ENCODE measurements at regions of chr11 and their contacts with region 1.

Region 1: DNA sequence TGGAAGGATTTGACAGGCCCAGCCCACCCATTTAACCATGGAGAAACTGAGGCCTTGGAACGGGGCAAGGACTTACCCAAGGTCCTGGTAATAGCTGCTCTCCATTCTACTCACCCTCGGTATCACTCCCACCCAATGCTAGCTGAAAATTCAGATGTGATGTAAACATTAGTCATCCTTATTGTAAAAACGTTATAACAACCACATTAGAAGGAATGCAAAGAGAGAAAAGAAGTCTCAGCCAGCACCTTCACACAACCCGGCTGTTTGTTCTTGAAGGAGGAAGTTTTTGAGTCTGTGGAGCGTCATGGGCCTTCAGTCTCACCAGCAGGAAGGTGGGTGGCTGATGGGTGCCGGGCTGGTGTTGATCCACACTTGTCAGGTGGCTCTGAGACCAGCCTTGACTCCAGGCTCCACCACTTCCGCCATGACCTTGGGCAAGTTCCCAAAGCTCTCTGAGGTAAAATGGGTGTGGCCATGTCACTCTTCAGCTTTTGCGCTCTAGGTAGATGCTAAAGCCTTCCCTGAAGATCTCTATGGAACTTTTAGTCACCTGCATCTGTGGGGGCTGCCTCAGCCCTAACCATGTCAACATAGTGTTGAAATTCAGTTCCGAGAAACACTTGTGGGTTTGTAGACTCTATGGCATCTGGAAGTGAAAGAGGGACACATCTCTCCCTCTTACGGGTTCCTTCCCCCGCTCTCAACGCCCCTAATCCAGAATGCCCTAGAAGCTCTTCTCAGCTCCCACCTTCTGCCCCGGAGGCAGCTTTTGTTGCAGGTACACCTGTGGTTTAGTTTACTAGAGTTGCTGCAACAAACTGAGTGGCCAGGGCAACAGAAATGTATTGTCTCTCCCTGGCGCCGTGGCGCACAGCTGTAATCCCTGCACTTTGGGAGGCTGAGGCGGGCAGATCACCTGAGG is 14.8 kb downstream of the CD6 start:
- DNase-seq: peak; percentile 59 to 99 (median 97)
- ATAC-seq: peak; percentile 93
- H3K4me3 ChIP-seq: peak overlapping the region; percentile 42
- H3K4me3 Mint-ChIP-seq: peak overlapping the region; percentile 75 to 96 (median 88)
- H3K27ac ChIP-seq: peak overlapping the region; percentile 96
- H3K27ac Mint-ChIP-seq: peak overlapping the region; percentile 91 to 100 (median 99)
- H3K4me1 ChIP-seq: peaks cover 62 to 88% of the 10 kb centered on the region in 2 donors
- H3K4me1 Mint-ChIP-seq: peaks cover 49 to 99% (median 94%) of the 10 kb centered on the region in 7 donors
- H3K27me3 ChIP-seq: no peaks in the 10 kb centered on the region
- H3K27me3 Mint-ChIP-seq: no peaks in the 10 kb centered on the region

Region 2: GRCh38 chr11:60913793-60914632 is 72.2 kb before region 1 on chr11 and contains the start of gene TMEM109:
- CTCF ChIA-PET with region 1: interaction called, 4 read pairs
- POLR2A ChIA-PET with region 1: interaction called, 16 read pairs
- intact Hi-C with region 1: loop called (anchors 1 to 5 kb)
- DNase-seq: peak; percentile 77 to 93 (median 91)
- ATAC-seq: peak; percentile 76
- H3K4me3 ChIP-seq: peak within 1 kb of the TSS; percentile 94
- H3K4me3 Mint-ChIP-seq: peak within 1 kb of the TSS; percentile 91 to 99 (median 98)
- H3K27ac ChIP-seq: peak within 1 kb of the TSS; percentile 94
- H3K27ac Mint-ChIP-seq: peak within 1 kb of the TSS; percentile 91 to 99 (median 97)
- H3K4me1 ChIP-seq: peaks cover 43 to 45% of the 10 kb centered on the region in 2 donors
- H3K4me1 Mint-ChIP-seq: peaks cover 39 to 77% (median 60%) of the 10 kb centered on the region in 7 donors
- H3K27me3 ChIP-seq: no peaks in the 10 kb centered on the region
- H3K27me3 Mint-ChIP-seq: peaks cover 0 to 11% (median 0%) of the 10 kb centered on the region in 5 donors
- total RNA-seq, gene TMEM109: 49.8 to 99.8 (median 56.9) TPM

Region 3: DNA sequence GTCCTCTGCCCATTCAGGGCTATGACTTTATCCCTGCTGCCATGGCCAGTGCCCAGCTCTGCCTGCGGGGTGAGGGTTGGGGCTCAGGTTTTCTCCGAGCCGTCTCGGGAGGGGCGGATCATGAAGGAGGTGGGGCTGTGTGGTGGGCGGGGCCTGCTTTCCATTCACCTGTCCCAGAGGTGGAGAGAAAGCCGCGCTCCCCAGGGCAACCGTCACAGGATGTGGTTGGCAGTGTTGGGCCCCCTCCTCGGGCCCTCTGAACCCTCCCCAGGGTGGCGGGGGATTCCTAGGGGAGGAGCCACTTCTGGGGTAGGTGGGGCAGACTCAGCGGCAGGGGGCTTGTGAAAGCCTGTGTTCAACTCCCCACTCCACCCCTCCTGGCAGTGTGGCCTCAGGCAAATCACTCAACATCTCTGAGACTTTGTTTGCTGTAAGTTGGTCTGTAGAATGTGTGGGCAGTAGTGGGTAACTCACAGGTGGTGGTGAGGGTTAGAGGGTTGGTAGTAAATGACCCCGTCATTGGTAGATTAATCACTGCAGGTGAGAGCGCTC is 35.5 kb after region 1 on chr11:
- CTCF ChIA-PET with region 1: interaction called, 3 read pairs
- POLR2A ChIA-PET with region 1: interaction called, 22 read pairs
- intact Hi-C with region 1: loop called (anchors 1 kb)
- DNase-seq: peak; percentile 72 to 98 (median 96)
- ATAC-seq: peak; percentile 91
- H3K4me3 ChIP-seq: peak overlapping the region; percentile 53
- H3K4me3 Mint-ChIP-seq: peak overlapping the region; percentile 68 to 90 (median 81)
- H3K27ac ChIP-seq: peak overlapping the region; percentile 82
- H3K27ac Mint-ChIP-seq: peak overlapping the region; percentile 88 to 100 (median 98)
- H3K4me1 ChIP-seq: peaks cover 49 to 56% of the 10 kb centered on the region in 2 donors
- H3K4me1 Mint-ChIP-seq: peaks cover 40 to 79% (median 76%) of the 10 kb centered on the region in 7 donors
- H3K27me3 ChIP-seq: no peaks in the 10 kb centered on the region
- H3K27me3 Mint-ChIP-seq: no peaks in the 10 kb centered on the region

Region 4: DNA sequence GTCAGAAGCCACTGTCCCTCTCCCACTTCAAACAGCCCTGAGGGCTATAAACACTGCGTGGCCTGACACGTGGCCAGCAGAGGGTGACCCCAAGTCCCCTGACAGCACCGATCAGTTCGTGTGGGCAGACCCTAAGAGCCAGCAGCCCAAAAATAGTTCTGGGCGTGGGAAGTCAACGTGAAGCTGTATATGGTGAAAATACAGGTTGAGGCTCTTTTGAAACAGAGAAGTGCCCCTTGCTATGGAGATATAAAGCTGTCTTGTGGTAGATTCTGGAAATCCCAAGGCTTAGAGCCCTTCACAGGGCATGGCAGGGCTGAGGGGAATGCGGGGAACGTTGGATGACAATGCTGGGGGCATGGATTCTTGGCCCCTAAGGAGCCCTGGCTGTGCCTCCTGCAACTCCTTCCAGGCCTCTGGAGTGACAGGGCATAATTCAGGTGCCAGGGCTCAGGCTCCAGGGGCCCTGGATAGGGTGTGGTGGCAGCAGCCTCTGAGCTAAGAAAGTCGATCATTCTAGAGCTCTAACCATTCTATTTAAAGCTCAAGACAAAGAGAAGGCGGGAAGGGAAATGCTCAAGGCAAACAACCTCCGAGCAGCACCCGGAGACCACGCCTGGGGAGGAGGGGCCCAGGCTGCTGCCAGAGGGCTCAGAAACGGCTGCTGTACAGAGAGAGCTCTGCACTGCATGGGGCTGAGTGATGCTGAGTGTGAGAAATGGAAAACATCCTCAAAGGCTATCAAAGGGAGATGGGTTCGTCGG is 55.7 kb after region 1 on chr11:
- CTCF ChIA-PET with region 1: interaction called, 7 read pairs
- POLR2A ChIA-PET with region 1: interaction called, 40 read pairs
- intact Hi-C with region 1: loop called in 1 of 2 experiments (anchors 1 kb)
- DNase-seq: peak; percentile 60 to 97 (median 96)
- ATAC-seq: peak; percentile 98
- H3K4me3 ChIP-seq: peak overlapping the region; percentile 20
- H3K4me3 Mint-ChIP-seq: peak overlapping the region; percentile 70 to 85 (median 76)
- H3K27ac ChIP-seq: peak overlapping the region; percentile 81
- H3K27ac Mint-ChIP-seq: peak overlapping the region; percentile 96 to 100 (median 98)
- H3K4me1 ChIP-seq: peaks cover 22 to 49% of the 10 kb centered on the region in 2 donors
- H3K4me1 Mint-ChIP-seq: peaks cover 40 to 70% (median 59%) of the 10 kb centered on the region in 7 donors
- H3K27me3 ChIP-seq: no peaks in the 10 kb centered on the region
- H3K27me3 Mint-ChIP-seq: no peaks in the 10 kb centered on the region

Region 5: GRCh38 chr11:61071208-61071681 is 85.0 kb after region 1 on chr11:
- CTCF ChIA-PET with region 1: interaction called, 4 read pairs
- POLR2A ChIA-PET with region 1: interaction called, 60 read pairs
- intact Hi-C with region 1: loop called in 1 of 2 experiments (anchors 1 kb)
- DNase-seq: peak in 8 of 9 donors; percentile 56 to 78 (median 71)
- ATAC-seq: peak; percentile 96
- H3K4me3 ChIP-seq: peak overlapping the region; percentile 21
- H3K4me3 Mint-ChIP-seq: peak overlapping the region; percentile 65 to 87 (median 76)
- H3K27ac ChIP-seq: peak overlapping the region; percentile 76
- H3K27ac Mint-ChIP-seq: peak overlapping the region; percentile 92 to 97 (median 97)
- H3K4me1 ChIP-seq: peaks cover 41 to 81% of the 10 kb centered on the region in 2 donors
- H3K4me1 Mint-ChIP-seq: peaks cover 69 to 99% (median 91%) of the 10 kb centered on the region in 7 donors
- H3K27me3 ChIP-seq: no peaks in the 10 kb centered on the region
- H3K27me3 Mint-ChIP-seq: peaks cover 0 to 4% (median 0%) of the 10 kb centered on the region in 5 donors

Region 6: DNA sequence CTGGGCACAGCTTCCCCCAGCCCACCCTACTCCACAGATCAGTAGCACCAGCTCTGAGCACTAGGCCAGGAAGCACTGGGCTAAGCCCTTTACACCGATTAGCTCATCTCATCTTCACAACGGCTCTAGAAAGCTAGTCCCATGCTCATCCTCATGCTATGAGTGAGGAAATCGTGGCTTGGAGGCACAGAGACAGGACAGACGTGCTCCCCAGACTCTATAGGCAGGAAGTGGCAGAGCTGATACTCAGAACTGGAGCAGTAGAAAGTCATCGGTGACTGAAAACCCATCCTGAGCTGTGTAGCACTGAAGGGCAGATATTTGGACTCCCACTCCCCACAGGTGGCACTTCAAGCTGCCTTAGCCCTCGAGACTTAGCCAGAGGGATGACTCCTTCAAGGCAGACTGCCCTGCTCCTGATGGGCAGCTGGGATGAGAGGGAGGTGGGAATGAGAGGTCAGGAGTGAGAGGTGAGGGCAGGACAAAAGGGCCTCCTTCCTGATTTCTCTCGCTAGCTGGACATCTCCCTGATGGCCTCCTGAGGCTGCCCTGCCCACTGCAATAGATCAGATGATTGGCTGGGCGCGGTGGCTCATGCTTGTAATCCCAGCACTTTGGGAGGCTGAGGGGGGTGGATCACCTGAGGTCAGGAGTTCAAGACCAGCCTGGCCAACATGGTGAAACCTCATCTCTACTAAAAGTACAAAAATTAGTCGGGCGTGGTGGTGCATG is 125.7 kb after region 1 on chr11:
- CTCF ChIA-PET with region 1: interaction called, 4 read pairs
- POLR2A ChIA-PET with region 1: interaction called, 4 read pairs
- intact Hi-C with region 1: loop called in 1 of 2 experiments (anchors 5 kb)
- DNase-seq: peak in 8 of 9 donors; percentile 57 to 78 (median 74)
- ATAC-seq: peak; percentile 81
- H3K4me3 ChIP-seq: peak overlapping the region; percentile 31
- H3K4me3 Mint-ChIP-seq: peak overlapping the region in 9 of 10 donors; percentile 82 to 93 (median 86)
- H3K27ac ChIP-seq: peak overlapping the region; percentile 78
- H3K27ac Mint-ChIP-seq: peak overlapping the region in 7 of 9 donors; percentile 81 to 98 (median 92)
- H3K4me1 ChIP-seq: peaks cover 58 to 93% of the 10 kb centered on the region in 2 donors
- H3K4me1 Mint-ChIP-seq: peaks cover 81 to 100% (median 97%) of the 10 kb centered on the region in 7 donors
- H3K27me3 ChIP-seq: no peaks in the 10 kb centered on the region
- H3K27me3 Mint-ChIP-seq: no peaks in the 10 kb centered on the region

Region 7: DNA sequence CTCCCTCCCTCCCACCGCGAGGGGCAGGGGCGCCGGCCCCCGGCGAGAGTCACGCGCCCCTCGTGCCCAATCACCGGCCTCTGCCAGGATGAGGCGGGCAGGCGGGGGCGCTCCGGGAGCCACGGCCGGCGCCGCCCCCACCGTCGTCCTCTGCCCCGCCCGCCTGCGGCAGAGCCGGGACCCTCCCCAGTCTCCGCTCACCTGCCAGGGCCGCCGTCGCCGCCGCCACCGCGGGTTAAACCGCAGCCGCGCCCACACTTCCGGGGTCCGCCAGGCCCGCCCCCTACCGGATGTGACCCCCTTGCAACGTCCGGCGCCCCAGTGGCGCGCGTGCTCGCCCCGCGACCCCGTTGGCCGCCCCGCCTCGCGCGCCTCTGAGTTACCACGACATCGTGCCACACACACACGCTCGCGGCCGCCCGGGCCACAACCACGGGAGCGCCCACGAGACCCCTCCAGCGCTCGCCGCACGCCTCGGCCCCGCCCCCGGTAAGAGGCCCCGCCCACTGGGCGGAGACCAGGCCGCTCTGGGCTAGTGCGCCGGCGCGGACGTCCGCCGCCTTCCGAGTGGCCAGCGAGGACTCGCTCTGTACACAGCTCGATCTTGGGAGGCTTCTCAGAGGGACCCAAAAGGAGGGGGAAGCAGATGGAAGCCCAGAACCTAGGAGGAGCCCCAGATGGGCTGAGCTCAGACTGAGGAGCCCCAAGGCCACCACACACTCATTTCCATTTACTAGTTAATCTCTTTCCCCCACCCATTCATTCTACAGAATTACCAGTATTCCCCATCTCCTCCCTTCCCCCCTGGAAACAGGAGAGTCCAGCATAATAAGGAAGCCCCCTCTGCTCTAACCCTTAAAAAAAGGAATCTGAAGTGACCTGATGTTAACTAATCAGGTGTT is 175.2 kb after region 1 on chr11 and contains the start of gene VPS37C:
- CTCF ChIA-PET with region 1: interaction called, 4 read pairs
- POLR2A ChIA-PET with region 1: interaction called, 4 read pairs
- intact Hi-C with region 1: loop called (anchors 1 to 5 kb)
- DNase-seq: peak; percentile 80 to 99 (median 87)
- ATAC-seq: peak; percentile 83
- H3K4me3 ChIP-seq: peak within 1 kb of the TSS; percentile 74
- H3K4me3 Mint-ChIP-seq: peak within 1 kb of the TSS; percentile 85 to 96 (median 90)
- H3K27ac ChIP-seq: peak within 1 kb of the TSS; percentile 78
- H3K27ac Mint-ChIP-seq: peak within 1 kb of the TSS; percentile 84 to 96 (median 94)
- H3K4me1 ChIP-seq: peaks cover 7 to 14% of the 10 kb centered on the region in 2 donors
- H3K4me1 Mint-ChIP-seq: peaks cover 31 to 62% (median 48%) of the 10 kb centered on the region in 7 donors
- H3K27me3 ChIP-seq: no peaks in the 10 kb centered on the region
- H3K27me3 Mint-ChIP-seq: no peaks in the 10 kb centered on the region
- total RNA-seq, gene VPS37C: 4.1 to 12.0 (median 7.9) TPM